ENCODE measurements at regions of chr16 and their contacts with region 1.

Region 1: DNA sequence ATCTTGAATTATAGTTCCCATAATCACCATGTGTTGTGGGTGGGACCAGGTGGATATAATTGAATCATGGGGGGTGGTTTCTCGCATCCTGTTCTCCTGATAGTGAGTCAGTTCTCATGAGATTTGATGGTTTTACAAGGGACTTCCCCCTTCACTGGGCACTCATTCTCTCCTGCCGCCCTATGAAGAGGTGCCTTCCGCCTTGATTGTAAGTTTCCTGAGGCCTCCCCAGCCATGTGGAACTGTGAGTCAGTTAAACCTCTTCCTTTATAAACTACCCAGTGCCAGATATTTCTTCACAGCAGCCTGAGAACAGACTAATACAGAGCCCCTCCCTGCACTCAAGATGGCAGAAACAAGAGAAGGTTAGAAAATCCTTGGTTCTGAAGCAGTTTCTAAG is 26.4 kb downstream of the LDAF1 start:
- DNase-seq: no peak
- CTCF ChIP-seq: no peak

Region 2: GRCh38 chr16:21277927-21278706 is 93.3 kb after region 1 on chr16 and contains the start of gene CRYM:
- in situ Hi-C with region 1: loop called (anchors 10 kb)
- DNase-seq: peak; percentile 81
- CTCF ChIP-seq: peak; percentile 83

Region 3: GRCh38 chr16:22321339-22322001 is 1136.6 kb after region 1 on chr16:
- in situ Hi-C with region 1: loop called (anchors 10 kb)
- DNase-seq: peak; percentile 83
- CTCF ChIP-seq: peak; percentile 88